ENCODE measurements at regions of chr4 and their contacts with region 1.

Region 1: GRCh38 chr4:48578132-48578968 is 88.3 kb downstream of the ZAR1 start:
- DNase-seq: peak in 7 of 10 donors; percentile 36 to 74 (median 53)
- H3K4me3 ChIP-seq: no peak overlapping the region
- H3K27ac ChIP-seq: peak overlapping the region in 31 of 59 donors; percentile 7 to 71 (median 46)
- H3K27me3 ChIP-seq: no peaks in the 10 kb centered on the region
- CTCF ChIP-seq: peak; percentile 84 to 99 (median 93)

Region 2: DNA sequence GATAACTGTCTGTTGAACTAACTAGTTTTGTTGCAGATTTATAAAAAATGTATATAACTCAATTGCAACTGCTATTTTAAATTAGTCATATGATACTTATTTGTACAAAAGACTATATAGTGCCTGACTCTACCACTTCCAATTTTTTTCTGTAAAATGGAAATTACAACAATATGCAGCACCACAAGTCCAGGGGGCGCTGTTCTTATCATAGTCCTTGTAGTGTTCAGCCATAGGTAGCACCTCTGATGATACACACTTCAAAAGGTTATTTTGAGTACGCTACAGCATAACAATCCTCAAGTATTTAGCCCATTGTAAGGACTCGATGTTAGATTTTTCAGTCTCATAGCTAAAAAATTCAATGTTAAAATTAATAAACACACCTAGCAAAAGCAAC is 915.4 kb before region 1 on chr4:
- intact Hi-C with region 1: no loop called
- DNase-seq: no peak
- H3K4me3 ChIP-seq: no peak overlapping the region
- H3K27ac ChIP-seq: no peak overlapping the region
- H3K27me3 ChIP-seq: no peaks in the 10 kb centered on the region
- CTCF ChIP-seq: peak in 27 of 56 donors; percentile 7 to 28 (median 17)

Region 3: GRCh38 chr4:48830706-48831531 is 252.6 kb after region 1 on chr4 and contains the start of gene OCIAD1:
- intact Hi-C with region 1: loop called (anchors 2 to 10 kb)
- DNase-seq: peak; percentile 96 to 99 (median 98)
- H3K4me3 ChIP-seq: peak within 1 kb of the TSS; percentile 63 to 99 (median 88)
- H3K27ac ChIP-seq: peak within 1 kb of the TSS; percentile 76 to 99 (median 94)
- H3K27me3 ChIP-seq: no peaks in the 10 kb centered on the region
- CTCF ChIP-seq: peak in 28 of 56 donors; percentile 6 to 44 (median 24)
- total RNA-seq, gene OCIAD1: 135 to 352 (median 263) TPM

Region 4: GRCh38 chr4:48877827-48878533 is 299.6 kb after region 1 on chr4:
- intact Hi-C with region 1: loop called in 1 of 2 experiments (anchors 10 kb)
- DNase-seq: peak in 1 of 10 donors; percentile 21
- H3K4me3 ChIP-seq: no peak overlapping the region
- H3K27ac ChIP-seq: no peak overlapping the region
- H3K27me3 ChIP-seq: no peaks in the 10 kb centered on the region
- CTCF ChIP-seq: peak in 24 of 56 donors; percentile 6 to 55 (median 24)

Region 5: GRCh38 chr4:48898733-48899431 is 320.5 kb after region 1 on chr4:
- intact Hi-C with region 1: loop called in 1 of 2 experiments (anchors 10 kb)
- DNase-seq: no peak
- H3K4me3 ChIP-seq: peak overlapping the region in 3 of 59 donors; percentile 4 to 14 (median 7)
- H3K27ac ChIP-seq: peak overlapping the region in 2 of 59 donors; percentile 0 to 7
- H3K27me3 ChIP-seq: no peaks in the 10 kb centered on the region
- CTCF ChIP-seq: no peak

Region 6: GRCh38 chr4:48963042-48963679 is 384.8 kb after region 1 on chr4:
- intact Hi-C with region 1: loop called (anchors 5 kb)
- DNase-seq: peak; percentile 33 to 78 (median 60)
- H3K4me3 ChIP-seq: no peak overlapping the region
- H3K27ac ChIP-seq: no peak overlapping the region
- H3K27me3 ChIP-seq: no peaks in the 10 kb centered on the region
- CTCF ChIP-seq: peak; percentile 82 to 100 (median 98)